Activated T-helper 2 cell treated with anti-CD3 and anti-CD28 coated beads, Interferon-gamma antibody, Interleukin-2, Interleukin-4, amounts not matched to agents 10 μg/mL and 5 μg/mL and 100 μg/mL, durations not matched to agents 14 hours and 24 hours and 36 hours (primary cell): ENCODE measurements at regions of chr14 and their contacts with region 1.

Region 1: GRCh38 chr14:58107947-58108552 is 44.0 kb downstream of the ARMH4 start:
- DNase-seq: no peak
- H3K4me3 Mint-ChIP-seq: no peak overlapping the region
- H3K27ac Mint-ChIP-seq: no peak overlapping the region
- H3K4me1 Mint-ChIP-seq: no peaks in the 10 kb centered on the region
- H3K27me3 Mint-ChIP-seq: peaks cover 30% of the 10 kb centered on the region

Region 2: GRCh38 chr14:58072288-58073071 is 35.6 kb before region 1 on chr14:
- intact Hi-C with region 1: no loop called
- DNase-seq: peak; percentile 22
- H3K4me3 Mint-ChIP-seq: no peak overlapping the region
- H3K27ac Mint-ChIP-seq: no peak overlapping the region
- H3K4me1 Mint-ChIP-seq: no peaks in the 10 kb centered on the region
- H3K27me3 Mint-ChIP-seq: peaks cover 4% of the 10 kb centered on the region

Region 3: GRCh38 chr14:58166005-58166983 is 58.2 kb after region 1 on chr14:
- intact Hi-C with region 1: loop called (anchors 1 kb)
- DNase-seq: peak; percentile 46
- H3K4me3 Mint-ChIP-seq: no peak overlapping the region
- H3K27ac Mint-ChIP-seq: no peak overlapping the region
- H3K4me1 Mint-ChIP-seq: peaks cover 3% of the 10 kb centered on the region
- H3K27me3 Mint-ChIP-seq: peaks cover 16% of the 10 kb centered on the region

Region 4: DNA sequence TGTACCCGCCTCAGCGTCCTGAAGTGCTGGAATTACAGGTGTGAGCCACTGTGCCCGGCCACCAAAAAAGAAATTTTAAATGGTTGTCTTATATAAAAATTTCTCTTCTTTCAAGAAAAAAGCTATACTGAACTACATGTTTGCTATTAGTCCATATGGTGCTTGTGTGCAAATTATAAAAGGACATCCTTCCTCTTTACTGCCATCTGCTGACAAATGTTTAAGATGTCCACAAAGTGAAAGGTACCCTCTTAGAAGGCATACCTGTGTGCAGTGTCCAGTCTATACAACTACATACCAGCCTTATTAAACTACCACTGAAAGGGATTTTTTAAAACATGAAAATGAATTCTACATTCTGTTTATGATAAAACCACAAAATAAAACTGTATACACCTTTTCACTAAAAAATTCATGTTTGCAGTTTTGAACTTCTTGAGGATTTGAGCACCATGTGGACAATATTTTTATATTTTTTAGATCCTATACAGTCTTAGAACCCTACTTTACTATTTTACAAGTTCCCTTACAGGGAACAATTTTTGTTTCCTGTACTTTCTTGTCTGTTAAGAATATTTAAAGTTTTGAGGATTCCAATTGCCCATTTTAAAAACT is 254.9 kb after region 1 on chr14:
- intact Hi-C with region 1: loop called (anchors 10 kb)
- DNase-seq: no peak
- H3K4me3 Mint-ChIP-seq: no peak overlapping the region
- H3K27ac Mint-ChIP-seq: no peak overlapping the region
- H3K4me1 Mint-ChIP-seq: peaks cover 6% of the 10 kb centered on the region
- H3K27me3 Mint-ChIP-seq: no peaks in the 10 kb centered on the region